ENCODE measurements at regions of chr20 and their contacts with region 1.

Region 1: DNA sequence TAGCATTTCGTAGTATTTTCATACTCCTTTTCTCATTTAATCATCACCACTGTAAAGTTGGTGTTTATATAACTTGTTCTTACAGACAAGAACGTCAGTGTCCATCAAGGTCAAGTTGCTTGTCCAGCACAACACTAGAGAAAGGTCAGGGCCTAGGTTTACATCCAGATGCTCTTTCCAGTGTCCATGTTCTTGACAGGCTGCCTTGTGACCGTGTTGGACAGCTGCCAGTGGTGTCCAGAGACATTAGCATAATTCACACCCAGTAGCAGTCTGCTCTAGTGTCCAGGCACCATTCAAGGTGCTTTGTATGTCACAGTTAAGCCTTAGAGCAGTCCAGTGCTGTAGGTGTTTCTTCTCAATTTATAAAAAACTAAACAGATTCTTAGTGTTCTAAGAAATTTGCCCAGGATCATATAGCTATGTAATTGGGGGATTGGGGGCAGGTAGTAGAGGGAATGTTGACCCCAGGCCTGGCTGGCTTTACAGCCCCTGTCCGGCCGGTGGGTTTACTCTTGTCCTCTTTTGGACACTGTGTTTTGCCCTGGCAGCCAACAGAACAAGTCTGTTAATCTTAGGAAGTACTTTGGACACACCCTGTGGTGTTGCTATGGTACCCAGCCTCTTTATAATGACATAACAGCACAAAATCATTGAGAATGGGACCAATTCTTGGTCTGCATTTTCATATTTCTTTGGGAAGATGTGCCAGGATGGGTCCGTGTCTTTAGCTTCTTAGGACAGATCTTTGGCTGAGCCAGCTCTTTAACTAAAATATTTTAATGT is 8.0 kb downstream of the STK35 start:
- DNase-seq: peak; percentile 36
- H3K4me3 Mint-ChIP-seq: peak overlapping the region; percentile 0
- H3K27ac Mint-ChIP-seq: peak overlapping the region; percentile 10
- H3K4me1 Mint-ChIP-seq: peaks cover 48% of the 10 kb centered on the region
- H3K27me3 Mint-ChIP-seq: no peaks in the 10 kb centered on the region
- CTCF ChIP-seq: no peak

Region 2: DNA sequence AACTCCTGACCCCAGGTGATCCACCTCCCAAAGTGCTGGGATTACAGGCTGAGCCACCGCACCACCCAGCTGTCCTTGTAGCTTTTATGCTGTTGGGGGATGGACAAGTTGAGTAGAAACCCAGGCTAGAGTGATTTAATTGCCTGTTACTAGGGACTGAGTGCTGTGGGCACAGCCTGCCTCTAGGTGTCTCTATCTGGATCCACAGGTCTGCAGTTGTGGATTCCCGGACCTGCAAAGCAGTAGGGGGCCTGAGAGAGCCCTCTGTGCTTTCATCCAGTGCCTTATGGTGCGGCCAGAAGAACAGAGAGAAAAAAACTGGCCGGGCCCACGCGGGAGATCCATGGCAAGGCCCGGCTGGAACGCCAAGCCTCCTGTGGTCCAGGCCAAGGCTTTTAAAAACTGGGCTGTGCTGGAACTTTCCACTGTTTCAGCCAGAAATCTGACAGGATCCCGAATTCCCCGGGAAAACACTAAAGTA is 209.3 kb before region 1 on chr20:
- CTCF ChIA-PET with region 1: no interaction called
- POLR2A ChIA-PET with region 1: interaction called, 12 read pairs
- intact Hi-C with region 1: loop called (anchors 5 kb)
- DNase-seq: peak; percentile 67
- H3K4me3 Mint-ChIP-seq: no peak overlapping the region
- H3K27ac Mint-ChIP-seq: no peak overlapping the region
- H3K4me1 Mint-ChIP-seq: peaks cover 22% of the 10 kb centered on the region
- H3K27me3 Mint-ChIP-seq: no peaks in the 10 kb centered on the region
- CTCF ChIP-seq: peak; percentile 35

Region 3: DNA sequence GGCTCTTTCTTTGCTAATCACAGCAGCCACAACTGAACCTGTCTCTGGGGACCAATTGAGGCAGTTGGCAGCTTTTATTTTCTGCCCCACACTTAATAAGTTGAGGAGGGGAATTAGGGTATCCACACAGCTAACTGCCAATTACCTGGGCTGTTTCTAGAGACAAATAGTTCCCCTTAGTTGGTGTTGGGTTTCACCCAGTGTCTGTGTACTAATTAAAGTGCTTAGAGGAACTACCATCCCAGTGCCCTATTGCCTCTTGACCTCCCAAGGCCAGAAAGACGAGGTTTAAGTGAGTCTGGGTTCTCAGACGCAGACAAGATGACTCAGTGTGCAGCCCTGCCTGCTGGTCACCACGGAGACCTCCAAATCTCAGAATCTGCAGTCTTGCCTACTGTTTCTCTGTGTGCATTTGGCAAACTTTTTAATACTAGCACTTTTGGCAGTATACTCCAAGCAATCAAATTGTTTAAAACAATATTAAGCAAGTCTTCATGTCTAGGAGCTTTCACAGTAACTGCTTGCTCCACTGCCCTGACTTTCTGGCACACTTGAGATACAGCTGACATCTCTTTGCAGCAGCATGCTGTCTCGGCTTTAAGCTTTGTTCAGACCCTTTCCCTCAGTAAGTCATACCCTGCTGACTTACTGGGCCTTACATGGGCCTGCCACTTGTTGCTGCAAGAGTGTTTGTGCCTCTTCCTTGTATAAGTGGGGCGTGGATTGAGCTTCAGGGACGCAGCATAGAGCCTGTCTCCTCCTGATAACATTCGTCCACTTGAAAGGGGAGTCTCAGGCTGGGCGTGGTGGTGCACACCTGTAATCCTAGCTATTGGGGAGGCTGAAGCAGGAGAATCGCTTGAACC is 23.9 kb after region 1 on chr20:
- CTCF ChIA-PET with region 1: interaction called, 3 read pairs
- POLR2A ChIA-PET with region 1: interaction called, 13 read pairs
- intact Hi-C with region 1: no loop called
- DNase-seq: peak; percentile 38
- H3K4me3 Mint-ChIP-seq: no peak overlapping the region
- H3K27ac Mint-ChIP-seq: no peak overlapping the region
- H3K4me1 Mint-ChIP-seq: peaks cover 34% of the 10 kb centered on the region
- H3K27me3 Mint-ChIP-seq: no peaks in the 10 kb centered on the region
- CTCF ChIP-seq: no peak

Region 4: GRCh38 chr20:2151858-2152281 is 42.3 kb after region 1 on chr20:
- CTCF ChIA-PET with region 1: interaction called, 4 read pairs
- POLR2A ChIA-PET with region 1: interaction called, 51 read pairs
- intact Hi-C with region 1: loop called (anchors 10 kb)
- DNase-seq: peak; percentile 64
- H3K4me3 Mint-ChIP-seq: no peak overlapping the region
- H3K27ac Mint-ChIP-seq: peak overlapping the region; percentile 92
- H3K4me1 Mint-ChIP-seq: peaks cover 31% of the 10 kb centered on the region
- H3K27me3 Mint-ChIP-seq: no peaks in the 10 kb centered on the region
- CTCF ChIP-seq: no peak